B cell (primary cell): ENCODE measurements at regions of chr3 and their contacts with region 1.

Region 1: GRCh38 chr3:194306109-194306686 is 44.9 kb downstream of the CPN2 start:
- DNase-seq: peak; percentile 89
- ATAC-seq: peak; percentile 63
- H3K4me3 ChIP-seq: peak overlapping the region in 3 of 5 experiments; percentile 7 to 57 (median 27)
- H3K4me3 Mint-ChIP-seq: peak overlapping the region; percentile 71
- H3K27ac ChIP-seq: peak overlapping the region; percentile 95 to 98
- H3K27ac Mint-ChIP-seq: peak overlapping the region; percentile 91
- H3K4me1 ChIP-seq: peaks cover 50 to 61% of the 10 kb centered on the region in 2 donors
- H3K4me1 Mint-ChIP-seq: peaks cover 51% of the 10 kb centered on the region
- H3K27me3 ChIP-seq: peaks cover 0 to 5% (median 2%) of the 10 kb centered on the region in 4 experiments
- H3K27me3 Mint-ChIP-seq: peaks cover 5% of the 10 kb centered on the region
- CTCF ChIP-seq: no peak

Region 2: DNA sequence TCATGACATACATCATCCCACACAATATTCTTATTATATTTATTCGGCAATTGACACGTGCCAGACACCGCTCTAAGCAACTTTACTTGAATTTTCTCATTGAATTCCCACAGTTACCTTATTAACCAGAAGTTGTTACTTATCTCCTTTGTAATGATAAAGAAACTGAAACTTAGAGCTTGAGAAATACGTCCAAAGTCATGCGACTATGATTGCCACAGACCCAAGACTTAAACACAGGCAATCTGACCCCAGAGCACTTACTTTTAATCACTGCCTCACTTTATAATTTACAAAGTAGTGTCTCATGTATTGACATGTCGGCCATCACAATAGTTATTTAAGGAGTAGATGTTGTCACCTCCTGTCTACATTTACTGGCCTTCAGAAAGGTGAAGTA is 816.2 kb before region 1 on chr3:
- CTCF ChIA-PET with region 1: no interaction called
- POLR2A ChIA-PET with region 1: no interaction called
- intact Hi-C with region 1: no loop called
- DNase-seq: no peak
- ATAC-seq: no peak
- H3K4me3 ChIP-seq: no peak overlapping the region
- H3K4me3 Mint-ChIP-seq: no peak overlapping the region
- H3K27ac ChIP-seq: no peak overlapping the region
- H3K27ac Mint-ChIP-seq: no peak overlapping the region
- H3K4me1 ChIP-seq: no peaks in the 10 kb centered on the region
- H3K4me1 Mint-ChIP-seq: no peaks in the 10 kb centered on the region
- H3K27me3 ChIP-seq: no peaks in the 10 kb centered on the region
- H3K27me3 Mint-ChIP-seq: no peaks in the 10 kb centered on the region
- CTCF ChIP-seq: no peak

Region 3: GRCh38 chr3:194176274-194176991 is 129.8 kb before region 1 on chr3:
- CTCF ChIA-PET with region 1: no interaction called
- POLR2A ChIA-PET with region 1: no interaction called
- intact Hi-C with region 1: no loop called
- DNase-seq: no peak
- ATAC-seq: no peak
- H3K4me3 ChIP-seq: no peak overlapping the region
- H3K4me3 Mint-ChIP-seq: no peak overlapping the region
- H3K27ac ChIP-seq: no peak overlapping the region
- H3K27ac Mint-ChIP-seq: no peak overlapping the region
- H3K4me1 ChIP-seq: no peaks in the 10 kb centered on the region
- H3K4me1 Mint-ChIP-seq: no peaks in the 10 kb centered on the region
- H3K27me3 ChIP-seq: peaks cover 0 to 12% (median 2%) of the 10 kb centered on the region in 4 experiments
- H3K27me3 Mint-ChIP-seq: peaks cover 36% of the 10 kb centered on the region
- CTCF ChIP-seq: no peak

Region 4: GRCh38 chr3:194204042-194204987 is 101.9 kb before region 1 on chr3:
- CTCF ChIA-PET with region 1: no interaction called
- POLR2A ChIA-PET with region 1: no interaction called
- intact Hi-C with region 1: loop called (anchors 5 kb)
- DNase-seq: no peak
- ATAC-seq: peak; percentile 42
- H3K4me3 ChIP-seq: peak overlapping the region in 4 of 5 experiments; percentile 16 to 63 (median 48)
- H3K4me3 Mint-ChIP-seq: peak overlapping the region; percentile 81
- H3K27ac ChIP-seq: no peak overlapping the region
- H3K27ac Mint-ChIP-seq: no peak overlapping the region
- H3K4me1 ChIP-seq: peaks cover 33 to 34% of the 10 kb centered on the region in 2 donors
- H3K4me1 Mint-ChIP-seq: peaks cover 28% of the 10 kb centered on the region
- H3K27me3 ChIP-seq: peaks cover 0 to 63% (median 32%) of the 10 kb centered on the region in 4 experiments
- H3K27me3 Mint-ChIP-seq: peaks cover 44% of the 10 kb centered on the region
- CTCF ChIP-seq: no peak